ENCODE measurements at regions of chr2 and their contacts with region 1.

Region 1: GRCh38 chr2:198042189-198042588 is 237.8 kb downstream of the PLCL1 start:
- DNase-seq: no peak
- H3K4me3 Mint-ChIP-seq: no peak overlapping the region
- H3K27ac Mint-ChIP-seq: no peak overlapping the region
- H3K4me1 Mint-ChIP-seq: peaks cover 6% of the 10 kb centered on the region
- H3K27me3 Mint-ChIP-seq: no peaks in the 10 kb centered on the region

Region 2: GRCh38 chr2:197869501-197870111 is 172.6 kb before region 1 on chr2:
- intact Hi-C with region 1: loop called (anchors 2 kb)
- DNase-seq: peak; percentile 73
- H3K4me3 Mint-ChIP-seq: peak overlapping the region; percentile 75
- H3K27ac Mint-ChIP-seq: peak overlapping the region; percentile 84
- H3K4me1 Mint-ChIP-seq: peaks cover 38% of the 10 kb centered on the region
- H3K27me3 Mint-ChIP-seq: no peaks in the 10 kb centered on the region

Region 3: DNA sequence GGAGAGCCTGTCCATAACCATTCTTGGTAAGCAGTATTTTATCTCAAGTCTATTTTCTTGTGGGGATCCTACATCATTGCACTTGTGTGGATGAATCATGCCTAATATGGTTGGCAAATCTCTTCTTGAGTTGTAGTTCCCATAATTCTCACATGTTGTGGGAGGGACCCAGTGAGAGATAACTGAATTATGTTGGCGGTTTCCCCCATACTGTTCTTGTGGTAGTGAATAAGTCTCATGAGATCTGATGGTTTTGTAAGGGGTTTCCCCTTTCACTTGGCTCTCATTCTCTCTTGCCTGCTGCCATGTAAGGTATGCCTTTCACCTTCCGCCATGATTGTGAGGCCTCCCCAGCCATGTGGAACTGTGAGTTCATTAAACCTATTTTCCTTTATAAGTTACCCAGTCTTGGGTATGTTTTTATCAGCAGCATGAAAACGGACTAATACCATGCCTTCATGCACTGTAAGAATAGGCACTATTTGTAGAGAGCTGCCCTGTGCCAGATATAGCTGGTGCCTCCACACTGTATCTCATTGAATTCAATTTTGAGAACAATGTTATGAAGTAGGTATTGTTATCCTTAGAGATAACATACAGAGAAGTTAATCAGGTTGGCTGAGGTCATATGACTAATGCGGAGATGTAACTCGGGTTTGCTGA is 89.5 kb before region 1 on chr2:
- intact Hi-C with region 1: loop called (anchors 5 kb)
- DNase-seq: no peak
- H3K4me3 Mint-ChIP-seq: no peak overlapping the region
- H3K27ac Mint-ChIP-seq: no peak overlapping the region
- H3K4me1 Mint-ChIP-seq: peaks cover 8% of the 10 kb centered on the region
- H3K27me3 Mint-ChIP-seq: peaks cover 5% of the 10 kb centered on the region

Region 4: DNA sequence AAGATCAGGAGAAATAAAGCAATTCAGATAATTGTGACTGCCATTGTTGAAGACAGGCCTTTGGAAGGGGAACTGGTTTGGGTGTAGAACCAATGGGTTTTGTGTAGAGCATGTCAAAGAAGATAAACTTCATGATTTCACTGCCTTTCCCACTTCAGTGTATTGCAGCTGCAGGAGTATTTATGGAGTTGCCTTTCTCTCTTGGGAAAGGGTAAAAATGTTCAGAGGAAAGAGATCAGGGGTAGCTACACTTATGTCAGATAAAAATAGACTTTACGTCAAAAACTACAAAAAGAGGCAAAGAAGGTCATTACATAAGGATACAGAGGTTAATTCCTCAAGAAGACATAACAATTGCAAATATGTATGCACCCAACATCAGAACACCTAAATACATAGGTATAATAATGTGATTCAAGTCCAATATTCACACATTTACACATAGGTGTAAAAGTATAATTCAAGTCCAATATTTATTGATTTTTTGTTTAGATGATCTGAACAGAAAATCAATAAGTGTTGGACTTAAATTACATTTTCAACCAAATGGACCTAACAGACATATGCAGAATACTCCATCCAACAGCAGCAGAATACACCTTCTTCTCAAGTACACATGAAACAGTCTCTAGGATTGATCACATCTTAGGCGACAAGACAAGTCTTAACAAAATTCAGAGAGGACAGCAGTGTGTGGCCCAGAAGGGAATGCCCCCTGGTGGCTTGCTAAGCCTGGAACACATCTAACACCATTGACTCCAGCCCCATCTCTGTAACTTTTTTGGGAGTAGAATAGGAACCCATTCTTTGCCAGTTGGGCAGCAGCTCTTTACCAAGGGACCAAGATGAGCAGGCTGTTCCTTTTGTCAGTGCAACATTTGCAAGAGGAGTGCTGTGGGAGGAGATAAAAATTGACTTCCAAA is 11.8 kb after region 1 on chr2:
- intact Hi-C with region 1: no loop called
- DNase-seq: peak; percentile 78
- H3K4me3 Mint-ChIP-seq: no peak overlapping the region
- H3K27ac Mint-ChIP-seq: no peak overlapping the region
- H3K4me1 Mint-ChIP-seq: peaks cover 2% of the 10 kb centered on the region
- H3K27me3 Mint-ChIP-seq: no peaks in the 10 kb centered on the region